Heart right ventricle (tissue), 16 donors: ENCODE measurements at regions of chr4 and their contacts with region 1.

Region 1: GRCh38 chr4:142347241-142347640 is 498.9 kb downstream of the INPP4B start:
- DNase-seq: no peak
- ATAC-seq: peak in 5 of 8 donors; percentile 54 to 76 (median 74)
- H3K4me3 ChIP-seq: no peak overlapping the region
- H3K27ac ChIP-seq: peak overlapping the region in 4 of 10 donors; percentile 10 to 68 (median 44)
- H3K4me1 ChIP-seq: peaks cover 2 to 64% (median 44%) of the 10 kb centered on the region in 9 donors
- H3K27me3 ChIP-seq: no peaks in the 10 kb centered on the region
- CTCF ChIP-seq: no peak

Region 2: DNA sequence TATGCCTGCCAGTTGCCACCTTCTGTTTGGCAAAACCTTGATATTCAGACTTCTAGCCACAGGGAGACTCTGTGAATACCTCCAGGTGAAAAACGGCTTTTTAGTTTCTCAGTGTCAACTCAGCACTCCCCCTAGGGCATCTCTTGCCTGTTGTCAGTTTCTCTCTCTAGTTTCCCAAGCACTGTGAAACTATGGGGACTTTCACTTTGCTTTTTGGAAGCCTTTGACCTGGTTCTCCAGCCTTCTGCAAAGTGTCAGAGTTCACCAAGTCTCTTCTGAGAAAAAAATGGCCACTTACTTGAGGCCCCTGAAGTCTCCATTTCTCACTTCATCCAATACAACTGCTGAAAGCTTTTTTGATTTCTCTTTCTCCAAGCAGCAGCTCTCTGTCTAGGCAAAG is 22.7 kb before region 1 on chr4:
- intact Hi-C with region 1: loop called in 1 of 10 experiments (anchors 1 kb)
- DNase-seq: no peak
- ATAC-seq: no peak
- H3K4me3 ChIP-seq: no peak overlapping the region
- H3K27ac ChIP-seq: no peak overlapping the region
- H3K4me1 ChIP-seq: peaks cover 0 to 5% (median 0%) of the 10 kb centered on the region in 9 donors
- H3K27me3 ChIP-seq: no peaks in the 10 kb centered on the region
- CTCF ChIP-seq: no peak

Region 3: DNA sequence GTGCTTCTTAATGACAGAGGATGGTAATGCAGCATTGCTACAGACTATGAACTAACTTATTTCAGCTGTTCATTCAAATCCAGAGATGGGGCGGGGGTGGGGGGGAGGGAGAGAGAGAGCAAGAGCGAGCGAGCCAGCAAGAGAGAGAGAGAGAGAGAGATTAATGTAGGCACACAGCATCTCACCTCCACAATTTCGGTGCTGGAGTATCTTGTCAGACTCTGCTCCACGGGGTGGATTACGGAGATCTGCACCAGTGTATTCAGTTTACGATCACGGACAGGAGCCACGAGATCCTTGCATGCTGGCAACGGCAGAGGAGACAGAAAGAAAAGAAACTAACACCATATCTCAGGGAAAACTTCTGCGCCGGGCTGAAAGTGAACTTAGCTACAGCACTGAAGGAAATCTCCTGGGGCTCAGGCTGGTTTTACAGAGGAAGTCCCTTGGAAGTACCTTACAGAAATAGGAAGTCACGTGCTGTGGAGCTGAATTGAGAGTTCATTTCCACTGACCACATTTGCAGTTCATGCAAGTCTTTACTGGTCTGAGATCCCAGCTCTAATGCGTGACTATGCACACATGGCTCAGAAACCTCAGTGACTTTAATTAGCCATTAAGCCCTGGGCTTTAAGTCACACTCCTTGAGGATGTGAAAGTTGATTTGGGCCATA is 57.9 kb after region 1 on chr4:
- intact Hi-C with region 1: loop called in 3 of 10 experiments (anchors 2 to 5 kb)
- DNase-seq: peak; percentile 12 to 67
- ATAC-seq: peak; percentile 62 to 83 (median 76)
- H3K4me3 ChIP-seq: peak overlapping the region; percentile 13 to 65 (median 52)
- H3K27ac ChIP-seq: peak overlapping the region in 9 of 10 donors; percentile 51 to 85 (median 71)
- H3K4me1 ChIP-seq: peaks cover 0 to 57% (median 48%) of the 10 kb centered on the region in 9 donors
- H3K27me3 ChIP-seq: no peaks in the 10 kb centered on the region
- CTCF ChIP-seq: no peak